GM18951 (cell line): ENCODE measurements at regions of chr12 and their contacts with region 1.

Region 1: GRCh38 chr12:49232940-49233841 is 31.7 kb upstream of the TUBA1C start:
- POLR2A ChIP-seq: no peak

Region 2: DNA sequence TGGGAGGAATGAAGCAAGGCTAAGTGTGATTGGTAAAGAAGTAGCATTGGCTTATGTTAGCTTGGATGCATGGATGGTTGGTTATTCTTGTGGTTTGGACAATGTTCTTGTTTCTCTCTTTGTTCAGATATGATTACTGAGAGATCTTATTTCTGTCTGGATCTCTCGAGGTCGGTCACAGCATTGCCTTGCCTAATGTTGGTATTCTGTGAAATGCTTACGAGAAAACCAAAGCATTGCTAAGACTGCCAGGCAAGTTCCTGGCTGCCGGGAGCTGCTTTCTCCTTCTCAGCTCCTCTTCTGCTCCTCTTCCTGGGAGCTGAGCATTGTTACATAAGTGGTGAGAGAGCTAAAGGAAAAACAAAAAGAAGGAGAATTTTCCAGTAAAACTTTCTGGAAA is 360.1 kb before region 1 on chr12:
- in situ Hi-C with region 1: no loop called
- POLR2A ChIP-seq: no peak

Region 3: GRCh38 chr12:49088190-49088931 is 144.8 kb before region 1 on chr12:
- in situ Hi-C with region 1: loop called (anchors 10 kb)
- POLR2A ChIP-seq: no peak